ENCODE measurements at regions of chr1 and their contacts with region 1.

Region 1: DNA sequence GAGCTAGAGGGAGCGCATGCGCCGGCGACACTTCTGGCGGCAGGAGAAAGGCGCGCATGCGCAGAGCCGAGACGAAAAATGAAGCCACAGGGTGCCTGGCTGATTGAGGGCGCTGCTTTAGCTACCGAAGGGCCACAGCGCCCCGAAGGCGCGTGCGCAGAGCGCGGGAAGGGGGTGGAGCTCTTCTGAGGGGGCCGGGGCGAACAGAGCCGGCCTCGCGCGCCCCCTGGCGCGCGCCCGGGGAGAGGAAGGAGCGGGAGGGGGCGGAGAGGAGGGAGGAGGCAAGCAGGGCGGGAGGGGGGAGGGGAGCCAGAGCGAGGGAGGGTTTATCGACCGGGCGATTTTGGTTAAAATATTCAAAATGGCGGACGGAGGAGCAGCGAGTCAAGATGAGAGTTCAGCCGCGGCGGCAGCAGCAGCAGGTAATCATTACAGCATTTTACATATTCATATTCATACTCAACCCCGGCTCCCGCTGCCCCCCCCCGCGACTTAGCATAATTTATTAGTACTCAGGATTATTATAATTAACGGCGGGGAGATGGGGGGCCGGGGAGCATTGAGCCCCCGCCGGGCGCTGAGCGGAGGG is at the start of gene POU2F1:
- DNase-seq: peak; percentile 98
- H3K4me3 Mint-ChIP-seq: peak within 1 kb of the TSS; percentile 94
- H3K27ac Mint-ChIP-seq: peak within 1 kb of the TSS; percentile 99
- H3K4me1 Mint-ChIP-seq: peaks cover 34% of the 10 kb centered on the region
- H3K27me3 Mint-ChIP-seq: no peaks in the 10 kb centered on the region
- total RNA-seq, gene POU2F1: 22.0 to 22.3 TPM

Region 2: GRCh38 chr1:167263819-167264464 is 43.3 kb after region 1 on chr1:
- CTCF ChIA-PET with region 1: interaction called, 15 read pairs
- POLR2A ChIA-PET with region 1: no interaction called
- DNase-seq: no peak
- H3K4me3 Mint-ChIP-seq: no peak overlapping the region
- H3K27ac Mint-ChIP-seq: no peak overlapping the region
- H3K4me1 Mint-ChIP-seq: peaks cover 27% of the 10 kb centered on the region
- H3K27me3 Mint-ChIP-seq: no peaks in the 10 kb centered on the region